ENCODE measurements at regions of chr12 and their contacts with region 1.

Region 1: DNA sequence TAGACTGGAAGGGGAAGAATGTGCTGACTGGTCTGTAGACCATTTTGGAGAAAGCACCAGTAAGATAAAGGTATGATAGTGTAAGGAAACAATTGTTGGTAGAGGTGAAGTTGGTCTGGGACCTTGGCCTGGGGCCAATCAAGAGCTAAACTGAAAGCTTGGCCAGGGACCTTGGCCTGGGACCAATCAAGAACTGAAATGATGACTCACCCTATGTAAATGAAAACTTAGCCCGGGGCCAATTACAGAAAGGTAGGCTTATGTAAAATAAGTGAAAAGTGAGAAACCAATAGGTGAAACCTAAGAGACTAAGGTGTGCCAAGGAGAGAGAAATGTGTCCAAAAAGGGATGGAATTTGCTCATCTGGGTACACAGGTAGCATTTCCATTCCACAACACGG is 776.0 kb downstream of the C12orf50 start:
- DNase-seq: peak; percentile 80
- ATAC-seq: peak; percentile 32; the same call in 1 of the 2 replicates
- H3K4me3 ChIP-seq: no peak overlapping the region
- H3K27ac ChIP-seq: 0 out of 2 replicates have a peak overlapping the region, but pooled peaks have one; percentile 10
- H3K4me1 ChIP-seq: peaks cover 4% of the 10 kb centered on the region
- H3K27me3 ChIP-seq: no peaks in the 10 kb centered on the region
- CTCF ChIP-seq: no peak

Region 2: GRCh38 chr12:87283111-87283510 is 30.0 kb after region 1 on chr12:
- CTCF ChIA-PET with region 1: no interaction called
- POLR2A ChIA-PET with region 1: no interaction called
- intact Hi-C with region 1: no loop called
- DNase-seq: no peak
- ATAC-seq: no peak
- H3K4me3 ChIP-seq: no peak overlapping the region
- H3K27ac ChIP-seq: no peak overlapping the region
- H3K4me1 ChIP-seq: no peaks in the 10 kb centered on the region
- H3K27me3 ChIP-seq: no peaks in the 10 kb centered on the region
- CTCF ChIP-seq: no peak

Region 3: GRCh38 chr12:87439990-87440827 is 187.1 kb after region 1 on chr12:
- CTCF ChIA-PET with region 1: no interaction called
- POLR2A ChIA-PET with region 1: interaction called, 3 read pairs
- intact Hi-C with region 1: loop called (anchors 5 kb)
- DNase-seq: peak; percentile 95
- ATAC-seq: peak; percentile 94
- H3K4me3 ChIP-seq: peak overlapping the region; percentile 7; the same call in 1 of the 2 replicates
- H3K27ac ChIP-seq: peak overlapping the region; percentile 93
- H3K4me1 ChIP-seq: peaks cover 24% of the 10 kb centered on the region
- H3K27me3 ChIP-seq: no peaks in the 10 kb centered on the region
- CTCF ChIP-seq: no peak

Region 4: DNA sequence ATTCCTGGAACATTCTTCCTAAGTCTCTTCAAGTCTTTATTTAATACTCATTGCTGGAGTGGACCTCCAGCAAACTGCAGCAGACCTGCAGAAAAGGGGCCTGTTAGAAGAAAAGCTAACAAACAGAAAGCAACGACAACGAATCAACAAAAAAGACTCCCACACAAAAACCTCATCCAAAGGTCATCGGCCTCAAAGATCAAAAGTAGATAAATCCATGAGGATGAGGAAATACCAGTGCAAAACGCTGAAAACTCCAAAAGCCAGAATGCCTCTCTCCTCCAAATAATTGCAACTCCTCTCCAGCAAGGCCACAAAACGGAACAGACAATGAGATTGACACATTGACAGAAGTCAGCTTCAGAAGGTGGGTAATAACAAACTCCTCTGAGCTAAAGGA is 303.8 kb after region 1 on chr12:
- CTCF ChIA-PET with region 1: no interaction called
- POLR2A ChIA-PET with region 1: no interaction called
- intact Hi-C with region 1: no loop called
- DNase-seq: no peak
- ATAC-seq: no peak
- H3K4me3 ChIP-seq: no peak overlapping the region
- H3K27ac ChIP-seq: no peak overlapping the region
- H3K4me1 ChIP-seq: no peaks in the 10 kb centered on the region
- H3K27me3 ChIP-seq: no peaks in the 10 kb centered on the region
- CTCF ChIP-seq: no peak